GM18951 (cell line): ENCODE measurements at regions of chr6 and their contacts with region 1.

Region 1: GRCh38 chr6:118283766-118284165 is 264.3 kb upstream of the PLN start:
- POLR2A ChIP-seq: no peak

Region 2: DNA sequence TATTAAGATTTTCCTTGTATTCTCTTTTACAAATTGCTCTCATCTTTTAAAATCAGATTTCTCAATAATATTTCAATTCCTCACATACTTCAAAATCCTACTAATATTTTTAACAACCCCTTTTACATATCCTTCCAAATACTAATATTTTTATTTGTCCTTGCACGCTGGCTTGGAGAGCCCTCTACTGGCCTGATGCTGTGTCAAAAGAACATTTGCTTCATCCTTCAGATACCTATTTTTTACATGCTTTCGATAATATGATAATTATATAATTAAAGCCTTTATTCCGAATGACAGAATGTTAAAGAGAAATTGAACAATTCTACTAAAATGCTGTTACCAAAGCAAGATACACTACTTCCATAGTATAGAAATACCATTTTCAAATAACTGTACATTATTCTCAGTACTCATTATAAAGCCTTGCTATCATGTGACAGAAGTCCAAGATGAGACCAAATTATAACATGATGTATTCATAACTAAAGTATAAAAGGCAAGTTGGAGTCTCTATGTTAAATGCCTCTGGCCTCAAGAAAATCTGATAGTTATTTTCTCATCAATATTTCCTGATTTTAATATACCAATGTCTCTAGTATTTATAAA is 225.3 kb after region 1 on chr6:
- in situ Hi-C with region 1: loop called (anchors 25 kb)
- POLR2A ChIP-seq: no peak

Region 3: GRCh38 chr6:118551063-118552053 is 267.6 kb after region 1 on chr6:
- in situ Hi-C with region 1: loop called (anchors 10 kb)
- POLR2A ChIP-seq: no peak

Region 4: GRCh38 chr6:118776607-118777549 is 493.1 kb after region 1 on chr6:
- in situ Hi-C with region 1: loop called (anchors 25 kb)
- POLR2A ChIP-seq: no peak

Region 5: GRCh38 chr6:118918326-118918725 is 634.6 kb after region 1 on chr6:
- in situ Hi-C with region 1: no loop called
- POLR2A ChIP-seq: no peak